Vagina (tissue), 2 donors: ENCODE measurements at regions of chr19 and their contacts with region 1.

Region 1: GRCh38 chr19:18203863-18204393 is at the start of gene RAB3A:
- DNase-seq: peak; percentile 100
- H3K4me3 ChIP-seq: peak within 1 kb of the TSS; percentile 64 to 87
- H3K27ac ChIP-seq: peak within 1 kb of the TSS; percentile 100
- H3K4me1 ChIP-seq: peaks cover 25% of the 10 kb centered on the region
- H3K27me3 ChIP-seq: no peaks in the 10 kb centered on the region
- CTCF ChIP-seq: peak in 1 of 3 experiments; percentile 13
- POLR2A ChIP-seq: peak in 1 of 2 donors; percentile 60
- total RNA-seq, gene RAB3A: 5.6 TPM

Region 2: GRCh38 chr19:18251587-18252369 is 47.9 kb after region 1 on chr19:
- intact Hi-C with region 1: loop called (anchors 10 kb)
- DNase-seq: no peak
- H3K4me3 ChIP-seq: no peak overlapping the region
- H3K27ac ChIP-seq: no peak overlapping the region
- H3K4me1 ChIP-seq: no peaks in the 10 kb centered on the region
- H3K27me3 ChIP-seq: no peaks in the 10 kb centered on the region
- CTCF ChIP-seq: peak; percentile 95 to 98 (median 97)
- POLR2A ChIP-seq: no peak

Region 3: DNA sequence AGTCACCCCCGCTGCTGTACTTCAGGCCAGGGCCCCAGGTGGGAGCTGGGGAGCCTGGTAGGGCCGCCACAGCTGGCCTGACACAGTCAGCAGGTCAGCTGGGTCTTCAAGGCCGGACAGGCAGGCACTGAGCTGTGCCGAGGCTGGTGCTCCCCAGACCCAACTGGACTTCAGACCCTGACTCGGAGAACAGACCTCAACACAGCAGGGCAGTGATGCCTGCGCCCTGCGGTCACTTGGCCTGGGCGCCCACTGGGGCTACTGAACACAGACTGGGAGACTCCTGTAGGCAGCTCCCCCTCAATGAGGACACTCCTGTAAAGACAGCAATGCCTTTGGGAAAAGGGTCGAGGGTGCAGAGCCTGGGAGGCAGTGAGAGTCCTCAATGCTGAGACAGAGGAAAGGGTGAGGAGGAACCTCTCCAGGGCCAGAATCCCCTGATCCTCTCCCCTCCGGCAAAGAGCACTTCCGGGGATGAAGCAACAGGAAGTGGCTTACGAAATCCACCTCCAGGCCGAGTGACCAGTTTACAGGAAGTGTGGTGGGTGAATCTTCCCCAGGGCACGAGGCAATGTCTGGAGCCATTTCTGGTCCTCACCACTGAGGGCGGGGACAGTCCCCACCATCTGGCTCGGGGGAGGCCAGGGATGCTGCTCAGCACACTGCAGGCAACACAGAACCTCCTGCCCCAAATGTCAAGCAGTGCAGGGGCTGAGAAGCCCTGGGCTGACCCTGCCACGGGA is 274.8 kb after region 1 on chr19:
- intact Hi-C with region 1: no loop called
- DNase-seq: no peak
- H3K4me3 ChIP-seq: peak overlapping the region in 1 of 2 donors; percentile 9
- H3K27ac ChIP-seq: peak overlapping the region; percentile 86
- H3K4me1 ChIP-seq: peaks cover 71% of the 10 kb centered on the region
- H3K27me3 ChIP-seq: no peaks in the 10 kb centered on the region
- CTCF ChIP-seq: no peak
- POLR2A ChIP-seq: no peak